HEK293 (cell line): ENCODE measurements at regions of chr4 and their contacts with region 1.

Region 1: GRCh38 chr4:176340871-176341685 is 21.3 kb downstream of the SPCS3 start:
- H3K4me3 ChIP-seq: no peak overlapping the region
- H3K27ac ChIP-seq: no peak overlapping the region
- H3K4me1 ChIP-seq: no peaks in the 10 kb centered on the region
- CTCF ChIP-seq: peak; percentile 25; the same call in 1 of the 2 replicates

Region 2: DNA sequence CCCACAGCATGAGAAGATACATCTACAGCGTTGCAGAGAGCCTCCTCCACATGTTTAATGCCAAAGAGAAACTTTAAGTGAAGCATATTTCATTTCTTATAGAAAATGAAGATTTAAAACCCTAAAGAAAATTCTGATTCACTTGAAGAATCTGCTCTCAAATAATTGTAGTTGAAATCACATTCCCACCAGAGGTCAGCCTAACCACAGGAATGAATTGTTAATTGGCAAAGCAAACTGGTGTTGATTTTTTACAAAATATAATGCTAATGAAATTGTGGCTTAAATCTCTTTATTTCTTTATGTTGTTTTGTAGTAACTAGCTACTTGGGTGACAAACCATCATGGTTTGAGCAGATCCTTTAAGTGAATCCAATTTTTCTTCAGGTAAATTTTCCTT is 306.6 kb before region 1 on chr4:
- CTCF ChIA-PET with region 1: interaction called, 18 read pairs
- POLR2A ChIA-PET with region 1: no interaction called
- H3K4me3 ChIP-seq: no peak overlapping the region
- H3K27ac ChIP-seq: no peak overlapping the region
- H3K4me1 ChIP-seq: no peaks in the 10 kb centered on the region
- CTCF ChIP-seq: 0 out of 2 replicates have a peak, but pooled peaks have one; percentile 15

Region 3: GRCh38 chr4:176150356-176150682 is 190.8 kb before region 1 on chr4:
- CTCF ChIA-PET with region 1: interaction called, 21 read pairs
- POLR2A ChIA-PET with region 1: no interaction called
- H3K4me3 ChIP-seq: no peak overlapping the region
- H3K27ac ChIP-seq: no peak overlapping the region
- H3K4me1 ChIP-seq: no peaks in the 10 kb centered on the region
- CTCF ChIP-seq: no peak

Region 4: GRCh38 chr4:176587920-176588319 is 246.8 kb after region 1 on chr4:
- CTCF ChIA-PET with region 1: no interaction called
- POLR2A ChIA-PET with region 1: no interaction called
- H3K4me3 ChIP-seq: no peak overlapping the region
- H3K27ac ChIP-seq: no peak overlapping the region
- H3K4me1 ChIP-seq: no peaks in the 10 kb centered on the region
- CTCF ChIP-seq: no peak